OCI-LY7 (cell line): ENCODE measurements at regions of chr4 and their contacts with region 1.

Region 1: DNA sequence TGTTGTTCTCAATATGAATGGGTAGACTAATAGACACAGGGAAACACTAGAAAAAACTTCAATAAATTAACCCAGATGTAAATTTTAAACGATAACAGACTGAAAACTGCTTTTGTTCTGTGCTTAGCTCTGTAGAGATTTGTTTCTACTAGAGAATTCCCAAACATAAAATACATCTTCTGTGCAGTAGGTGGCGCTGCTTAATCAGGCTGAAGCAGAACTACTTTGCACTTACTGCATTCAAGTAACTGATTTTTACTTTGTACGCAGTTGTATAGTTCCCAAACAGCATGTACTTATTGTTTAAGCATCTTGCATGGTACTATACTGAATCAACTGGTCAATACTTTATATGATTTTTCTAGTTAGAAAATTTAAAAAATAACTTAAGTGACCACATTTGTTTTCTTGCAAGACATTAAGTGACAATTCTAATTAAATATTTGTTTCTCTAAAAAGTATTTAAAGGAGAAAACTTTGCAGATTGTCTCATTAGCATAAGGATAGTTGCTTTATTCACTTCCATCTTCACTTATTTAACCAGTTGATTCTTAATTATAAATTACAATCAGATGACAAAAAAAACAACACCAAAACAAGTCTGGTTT is 490.6 kb downstream of the IL15 start:
- DNase-seq: peak; percentile 54
- H3K4me3 ChIP-seq: no peak overlapping the region
- H3K27ac ChIP-seq: no peak overlapping the region
- H3K4me1 ChIP-seq: no peaks in the 10 kb centered on the region
- CTCF ChIP-seq: peak; percentile 93

Region 2: DNA sequence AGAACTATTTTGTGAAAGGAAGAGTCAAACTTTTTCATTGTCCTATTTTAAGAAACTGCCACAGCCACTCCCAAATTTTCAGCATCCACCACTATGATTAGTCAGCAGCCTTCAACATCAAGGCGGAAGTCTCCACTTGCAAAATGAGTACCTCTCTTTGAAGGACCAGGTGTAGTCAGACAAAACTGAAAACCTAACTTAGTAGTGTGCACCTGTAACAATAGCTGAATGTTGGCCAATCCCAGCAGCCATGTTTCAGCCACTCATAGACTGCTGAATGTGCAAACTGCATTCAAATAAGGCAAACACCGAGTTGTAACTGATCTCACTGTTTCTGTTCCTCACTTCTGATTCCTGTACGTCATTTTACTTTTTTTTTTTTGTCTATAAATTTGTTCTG is 149.6 kb before region 1 on chr4:
- CTCF ChIA-PET with region 1: no interaction called
- POLR2A ChIA-PET with region 1: no interaction called
- intact Hi-C with region 1: no loop called
- DNase-seq: no peak
- H3K4me3 ChIP-seq: no peak overlapping the region
- H3K27ac ChIP-seq: no peak overlapping the region
- H3K4me1 ChIP-seq: no peaks in the 10 kb centered on the region
- CTCF ChIP-seq: no peak

Region 3: DNA sequence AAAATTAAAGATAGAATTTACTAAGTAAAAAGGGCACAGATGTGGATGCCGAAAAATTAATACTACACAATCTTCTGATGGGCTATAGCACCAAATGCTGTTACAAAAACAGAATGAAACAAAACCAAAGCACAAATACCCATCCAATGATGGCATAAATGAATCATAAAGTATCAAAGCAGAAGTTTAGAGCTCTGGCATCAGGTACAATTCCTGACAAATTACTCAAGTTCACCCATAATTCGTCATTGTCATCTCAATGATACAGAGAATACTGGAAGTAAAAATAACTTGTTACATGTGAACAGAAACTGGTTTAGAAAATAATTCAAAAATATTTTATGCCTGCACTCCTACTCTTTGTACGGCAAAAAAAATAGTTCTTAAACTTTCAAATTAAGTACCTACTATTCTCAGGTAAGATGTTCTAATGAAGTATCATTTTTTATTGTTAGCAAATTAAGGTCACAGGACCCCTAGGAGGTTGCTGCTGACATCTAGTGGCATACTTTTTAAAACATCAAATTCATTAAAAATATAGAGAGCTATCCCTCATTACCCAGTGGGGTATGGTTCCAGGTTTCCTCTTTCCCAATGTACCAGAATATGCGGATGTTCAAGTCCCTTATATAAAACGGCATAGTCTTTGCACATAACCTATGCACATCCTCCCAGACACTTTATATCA is 593.0 kb after region 1 on chr4:
- CTCF ChIA-PET with region 1: no interaction called
- POLR2A ChIA-PET with region 1: no interaction called
- intact Hi-C with region 1: loop called (anchors 5 kb)
- DNase-seq: peak; percentile 5
- H3K4me3 ChIP-seq: no peak overlapping the region
- H3K27ac ChIP-seq: no peak overlapping the region
- H3K4me1 ChIP-seq: no peaks in the 10 kb centered on the region
- CTCF ChIP-seq: peak; percentile 76

Region 4: GRCh38 chr4:142846729-142847596 is 720.0 kb after region 1 on chr4:
- CTCF ChIA-PET with region 1: no interaction called
- POLR2A ChIA-PET with region 1: no interaction called
- intact Hi-C with region 1: loop called (anchors 10 kb)
- DNase-seq: peak; percentile 7
- H3K4me3 ChIP-seq: no peak overlapping the region
- H3K27ac ChIP-seq: no peak overlapping the region
- H3K4me1 ChIP-seq: no peaks in the 10 kb centered on the region
- CTCF ChIP-seq: peak; percentile 37; the same call in 1 of the 2 replicates